BJ (cell line): ENCODE measurements at regions of chr12 and their contacts with region 1.

Region 1: GRCh38 chr12:117836999-117837736 is 131.6 kb downstream of the KSR2 start:
- DNase-seq: no peak
- H3K4me3 ChIP-seq: no peak overlapping the region
- H3K27me3 ChIP-seq: no peaks in the 10 kb centered on the region
- CTCF ChIP-seq: peak; percentile 98

Region 2: DNA sequence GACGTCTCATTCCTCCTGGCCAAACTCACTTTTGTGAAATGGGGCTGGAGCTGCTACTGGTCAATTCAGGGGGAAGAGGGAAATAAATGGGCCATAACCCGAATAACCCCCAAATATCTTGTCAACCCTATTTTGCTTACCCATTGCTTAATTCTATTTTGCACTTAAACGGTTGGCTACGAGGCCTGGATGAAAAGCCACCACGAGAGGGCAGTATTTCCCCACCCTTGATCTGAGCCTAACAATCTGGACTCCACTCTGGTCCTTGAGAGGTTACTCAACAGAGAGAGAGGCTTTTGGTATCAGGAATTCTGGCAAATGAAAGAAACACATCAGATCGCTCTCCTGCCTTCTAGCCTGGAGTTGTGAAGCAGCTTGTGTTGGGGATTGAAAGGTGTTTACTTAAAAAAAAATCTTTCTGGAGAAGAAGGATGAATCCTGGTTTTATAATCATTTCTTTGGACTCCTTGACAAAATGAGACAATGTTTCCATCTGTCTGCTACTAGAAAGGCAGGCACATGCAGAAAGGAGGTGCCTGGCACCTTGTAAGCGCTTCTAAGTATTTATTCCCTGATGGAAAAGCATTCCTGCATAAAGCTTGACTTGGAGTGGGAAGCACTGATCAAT is 624.5 kb before region 1 on chr12:
- CTCF ChIA-PET with region 1: interaction called, 21 read pairs
- POLR2A ChIA-PET with region 1: no interaction called
- DNase-seq: no peak
- H3K4me3 ChIP-seq: no peak overlapping the region
- H3K27me3 ChIP-seq: no peaks in the 10 kb centered on the region; the same call in 1 of the 2 replicates
- CTCF ChIP-seq: peak; percentile 93

Region 3: GRCh38 chr12:117236456-117237001 is 600.6 kb before region 1 on chr12:
- CTCF ChIA-PET with region 1: interaction called, 27 read pairs
- POLR2A ChIA-PET with region 1: no interaction called
- DNase-seq: no peak
- H3K4me3 ChIP-seq: no peak overlapping the region
- H3K27me3 ChIP-seq: peaks cover 2% of the 10 kb centered on the region; the same call in 1 of the 2 replicates
- CTCF ChIP-seq: peak; percentile 78

Region 4: DNA sequence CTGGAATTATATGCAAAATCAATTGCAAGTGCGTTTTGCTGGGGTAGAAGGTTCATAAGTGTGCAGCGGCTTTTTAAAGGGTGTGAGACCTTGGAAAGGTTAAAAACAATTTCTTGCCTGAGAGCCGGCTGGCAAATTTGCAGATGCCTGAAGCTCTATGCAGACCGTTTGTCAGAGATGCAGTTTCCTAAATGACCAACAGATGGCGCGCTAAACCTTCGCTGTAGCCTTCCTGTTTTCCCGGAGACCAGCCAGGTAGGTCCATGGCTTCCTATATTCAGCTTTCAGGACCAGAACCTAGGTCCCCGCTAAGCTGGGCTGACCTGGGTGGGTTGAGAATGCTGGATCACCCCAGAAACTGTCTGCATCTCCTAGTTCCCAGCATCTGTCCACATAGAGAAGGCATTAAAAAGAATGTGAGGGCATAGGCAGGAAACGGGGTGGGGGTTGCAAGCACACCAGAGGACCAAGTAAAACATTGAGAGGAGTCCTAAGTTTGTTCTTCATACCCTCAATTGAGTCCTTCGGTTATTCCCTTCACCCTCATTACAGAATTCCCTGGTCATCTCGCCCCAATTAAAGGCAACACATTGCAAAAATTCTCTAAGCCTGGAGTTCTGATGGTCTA is 470.0 kb before region 1 on chr12:
- CTCF ChIA-PET with region 1: interaction called, 342 read pairs
- POLR2A ChIA-PET with region 1: no interaction called
- DNase-seq: peak; percentile 11
- H3K4me3 ChIP-seq: no peak overlapping the region
- H3K27me3 ChIP-seq: peaks cover 3% of the 10 kb centered on the region
- CTCF ChIP-seq: peak; percentile 85

Region 5: DNA sequence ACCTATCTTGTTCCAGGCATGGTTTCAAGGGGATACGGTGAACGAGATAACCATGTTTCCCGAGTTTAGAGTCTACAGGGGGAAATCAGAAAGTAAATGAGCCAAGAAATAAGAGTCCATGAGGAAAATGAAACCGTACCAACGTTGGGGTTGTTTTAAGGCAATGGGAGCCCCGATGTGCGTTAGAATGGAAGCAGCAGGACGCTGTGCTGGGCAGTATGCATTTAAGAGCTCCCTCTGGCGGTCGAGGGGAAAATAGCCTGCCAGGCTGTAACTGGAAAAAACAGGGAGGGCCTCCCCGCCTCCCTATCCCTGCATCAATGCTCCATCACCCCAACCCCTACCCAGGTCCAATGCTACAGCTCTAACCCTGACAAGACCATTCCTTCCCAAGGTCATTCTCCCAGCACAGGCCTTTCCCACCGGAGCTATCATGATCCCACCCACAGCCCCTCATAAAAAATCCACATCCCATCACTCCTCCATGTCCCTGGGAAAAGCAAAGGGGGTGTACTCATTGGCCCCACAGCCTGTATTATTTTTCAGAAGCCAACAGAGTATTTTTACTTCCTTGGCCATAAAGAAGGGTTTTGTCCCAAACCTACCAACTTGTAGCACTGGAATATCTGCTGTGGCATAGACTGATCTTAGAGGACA is 249.4 kb before region 1 on chr12:
- CTCF ChIA-PET with region 1: interaction called, 10 read pairs
- POLR2A ChIA-PET with region 1: no interaction called
- DNase-seq: no peak
- H3K4me3 ChIP-seq: no peak overlapping the region
- H3K27me3 ChIP-seq: no peaks in the 10 kb centered on the region
- CTCF ChIP-seq: peak; percentile 76

Region 6: GRCh38 chr12:117718559-117718958 is 118.6 kb before region 1 on chr12:
- CTCF ChIA-PET with region 1: no interaction called
- POLR2A ChIA-PET with region 1: no interaction called
- DNase-seq: no peak
- H3K4me3 ChIP-seq: no peak overlapping the region
- H3K27me3 ChIP-seq: peaks cover 2% of the 10 kb centered on the region; the same call in 1 of the 2 replicates
- CTCF ChIP-seq: no peak

Region 7: GRCh38 chr12:117850048-117850447 is 12.9 kb after region 1 on chr12:
- CTCF ChIA-PET with region 1: interaction called, 63 read pairs
- POLR2A ChIA-PET with region 1: no interaction called
- DNase-seq: no peak
- H3K4me3 ChIP-seq: no peak overlapping the region
- H3K27me3 ChIP-seq: peaks cover 5% of the 10 kb centered on the region; the same call in 1 of the 2 replicates
- CTCF ChIP-seq: peak; percentile 90

Region 8: DNA sequence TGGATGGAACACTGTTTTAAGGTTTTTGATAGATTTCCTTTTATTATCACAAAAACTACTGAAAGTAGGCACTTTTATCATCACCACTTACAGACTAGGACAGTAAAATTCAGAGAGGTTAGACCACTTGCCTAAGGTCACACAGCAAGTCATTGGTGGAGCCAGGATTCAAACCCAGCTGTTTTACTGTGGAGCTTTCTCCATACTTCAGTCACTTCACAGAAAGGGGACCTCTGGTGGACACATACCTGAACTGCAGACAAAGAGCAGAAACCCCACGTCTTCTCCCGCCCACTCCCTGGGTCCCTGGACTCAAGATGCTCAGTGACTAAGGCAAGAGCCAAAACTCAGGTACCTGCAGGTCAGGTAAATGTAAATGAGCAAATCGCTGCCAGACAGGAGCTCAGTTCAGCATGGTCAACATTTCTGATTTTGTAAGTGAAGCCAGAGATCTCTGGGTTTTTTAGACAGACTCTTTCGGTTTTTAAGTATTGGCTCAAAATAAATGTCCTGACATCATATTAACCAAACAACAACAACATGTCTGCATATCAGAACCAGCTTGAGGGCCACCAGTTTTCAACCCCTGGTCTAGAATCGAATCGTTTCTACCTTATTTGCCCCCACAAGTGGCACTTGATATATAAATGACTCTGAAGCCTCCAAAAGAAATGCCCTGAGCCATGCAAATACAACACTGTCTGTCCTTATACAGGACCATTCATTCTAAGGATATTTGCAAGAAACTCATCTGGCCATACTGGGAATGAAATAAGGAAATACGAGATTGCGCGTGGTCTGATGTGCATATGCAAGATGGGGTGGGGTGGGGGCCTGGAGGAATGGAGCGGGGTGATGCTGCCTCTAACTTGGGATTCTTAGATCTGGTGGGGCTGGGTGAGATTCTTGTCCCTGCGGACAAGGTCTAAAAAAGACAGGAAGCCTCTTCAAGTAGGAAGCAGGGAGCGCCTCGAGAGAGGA is 20.8 kb after region 1 on chr12:
- CTCF ChIA-PET with region 1: interaction called, 27 read pairs
- POLR2A ChIA-PET with region 1: no interaction called
- DNase-seq: no peak
- H3K4me3 ChIP-seq: no peak overlapping the region
- H3K27me3 ChIP-seq: no peaks in the 10 kb centered on the region; the same call in 1 of the 2 replicates
- CTCF ChIP-seq: peak; percentile 72

Region 9: DNA sequence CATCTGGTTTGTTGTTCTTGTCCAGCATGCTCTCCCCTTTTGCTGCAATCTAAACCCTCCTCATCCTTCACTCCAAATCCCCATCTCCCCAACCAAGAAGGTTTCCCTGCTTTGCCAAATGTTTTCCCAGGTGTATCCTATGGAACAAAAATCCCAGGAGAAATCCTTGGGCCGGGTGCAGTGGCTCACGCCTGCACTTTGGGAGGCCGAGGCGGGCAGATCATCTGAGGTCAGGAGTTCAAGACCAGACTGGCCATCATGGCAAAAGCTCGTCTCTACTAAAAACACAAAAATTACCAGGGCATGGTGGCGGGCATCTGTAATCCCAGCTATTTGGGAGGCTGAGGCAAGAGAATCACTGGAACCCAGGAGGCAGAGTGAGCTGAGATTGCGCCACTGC is 126.7 kb after region 1 on chr12:
- CTCF ChIA-PET with region 1: no interaction called
- POLR2A ChIA-PET with region 1: no interaction called
- DNase-seq: no peak
- H3K4me3 ChIP-seq: no peak overlapping the region
- H3K27me3 ChIP-seq: peaks cover 6% of the 10 kb centered on the region
- CTCF ChIP-seq: no peak